ENCODE measurements at regions of chrX and their contacts with region 1.

Region 1: GRCh38 chrX:154013614-154014360 is 5.9 kb downstream of the IRAK1 start:
- DNase-seq: peak in 2 of 10 donors; percentile 40 to 65
- H3K4me3 ChIP-seq: no peak overlapping the region
- H3K27ac ChIP-seq: peak overlapping the region in 54 of 59 donors; percentile 6 to 89 (median 74)
- H3K27me3 ChIP-seq: peaks cover 0 to 86% (median 18%) of the 10 kb centered on the region in 45 donors
- CTCF ChIP-seq: peak; percentile 61 to 93 (median 87)

Region 2: DNA sequence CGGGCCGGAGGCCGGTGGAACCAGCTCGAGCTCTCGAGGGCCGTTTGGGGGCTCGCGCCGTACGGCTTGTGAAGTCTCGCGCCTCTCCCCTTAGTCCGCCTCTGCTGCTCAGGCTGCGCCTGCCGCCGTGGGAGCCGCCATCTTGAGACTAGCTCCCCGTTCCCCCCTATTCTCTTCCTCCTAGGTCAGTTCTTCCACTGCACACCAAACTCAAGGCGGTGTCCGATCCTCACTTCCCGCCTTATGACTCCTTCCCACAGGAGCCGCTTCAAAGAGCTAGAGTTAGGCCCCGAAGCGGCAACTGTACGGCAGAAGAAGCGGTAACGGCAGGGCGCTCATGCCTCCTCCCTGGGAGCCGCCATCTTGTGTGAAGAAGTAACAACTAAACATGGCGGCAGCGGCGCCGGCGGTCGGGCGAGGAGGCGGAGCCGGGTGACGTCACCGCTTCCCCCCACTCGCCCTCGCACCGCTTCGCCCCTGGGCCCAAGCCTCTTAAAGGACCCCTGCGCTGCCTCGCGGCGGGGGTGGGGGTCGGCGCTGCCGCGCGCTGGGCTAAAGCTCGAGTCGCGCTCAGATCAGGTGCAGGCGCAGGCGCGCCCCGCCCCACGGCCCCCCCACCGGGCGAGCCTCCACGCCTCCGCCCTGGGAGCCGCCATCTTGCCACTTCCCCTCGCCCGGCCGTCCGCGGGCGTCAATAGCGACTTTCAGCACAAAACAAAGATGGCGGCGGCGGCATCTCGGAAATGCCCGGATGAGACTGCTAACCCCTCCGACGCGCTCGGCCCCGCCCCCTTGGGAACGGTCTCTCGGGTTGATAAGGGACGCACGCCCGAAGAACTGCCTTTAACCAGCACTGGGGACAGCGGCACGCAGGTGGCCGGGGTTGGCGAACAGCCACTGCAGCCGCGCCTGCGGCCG is 42.1 kb before region 1 on chrX and contains the start of gene HCFC1:
- intact Hi-C with region 1: loop called in 1 of 2 experiments (anchors 5 kb)
- DNase-seq: peak; percentile 83 to 92 (median 89)
- H3K4me3 ChIP-seq: peak within 1 kb of the TSS; percentile 54 to 94 (median 77)
- H3K27ac ChIP-seq: peak within 1 kb of the TSS; percentile 97 to 100 (median 99)
- H3K27me3 ChIP-seq: peaks cover 0 to 23% (median 0%) of the 10 kb centered on the region in 45 donors
- CTCF ChIP-seq: no peak
- total RNA-seq, gene HCFC1: 41.2 to 97.5 (median 57.4) TPM

Region 3: GRCh38 chrX:154051201-154051810 is 37.5 kb after region 1 on chrX:
- intact Hi-C with region 1: loop called (anchors 2 to 5 kb)
- DNase-seq: peak in 8 of 10 donors; percentile 35 to 82 (median 66)
- H3K4me3 ChIP-seq: no peak overlapping the region
- H3K27ac ChIP-seq: peak overlapping the region in 4 of 59 donors; percentile 2 to 51 (median 15)
- H3K27me3 ChIP-seq: peaks cover 0 to 63% (median 6%) of the 10 kb centered on the region in 45 donors
- CTCF ChIP-seq: peak; percentile 18 to 81 (median 70)